CD8-positive, alpha-beta memory T cell (primary cell): ENCODE measurements at regions of chr1 and their contacts with region 1.

Region 1: GRCh38 chr1:203326830-203327683 is 21.7 kb downstream of the BTG2 start:
- DNase-seq: peak; percentile 91 to 97 (median 95)
- H3K4me3 ChIP-seq: peak overlapping the region; percentile 78
- H3K4me3 Mint-ChIP-seq: peak overlapping the region; percentile 77 to 90 (median 80)
- H3K27ac ChIP-seq: peak overlapping the region; percentile 90
- H3K27ac Mint-ChIP-seq: peak overlapping the region; percentile 93 to 99 (median 98)
- H3K4me1 ChIP-seq: peaks cover 63% of the 10 kb centered on the region
- H3K4me1 Mint-ChIP-seq: peaks cover 65 to 68% (median 66%) of the 10 kb centered on the region in 3 donors
- H3K27me3 ChIP-seq: no peaks in the 10 kb centered on the region
- H3K27me3 Mint-ChIP-seq: peaks cover 0 to 3% of the 10 kb centered on the region in 2 donors

Region 2: GRCh38 chr1:203290261-203291089 is 36.6 kb before region 1 on chr1:
- CTCF ChIA-PET with region 1: interaction called, 775 read pairs
- POLR2A ChIA-PET with region 1: interaction called, 140 read pairs
- DNase-seq: peak; percentile 95 to 98 (median 97)
- H3K4me3 ChIP-seq: peak overlapping the region; percentile 76
- H3K4me3 Mint-ChIP-seq: peak overlapping the region; percentile 63 to 87 (median 85)
- H3K27ac ChIP-seq: peak overlapping the region; percentile 99
- H3K27ac Mint-ChIP-seq: peak overlapping the region; percentile 99 to 100 (median 100)
- H3K4me1 ChIP-seq: peaks cover 62% of the 10 kb centered on the region
- H3K4me1 Mint-ChIP-seq: peaks cover 64 to 73% (median 64%) of the 10 kb centered on the region in 3 donors
- H3K27me3 ChIP-seq: no peaks in the 10 kb centered on the region
- H3K27me3 Mint-ChIP-seq: peaks cover 0 to 13% of the 10 kb centered on the region in 2 donors

Region 3: GRCh38 chr1:203311368-203312301 is 15.4 kb before region 1 on chr1:
- CTCF ChIA-PET with region 1: interaction called, 116 read pairs
- POLR2A ChIA-PET with region 1: interaction called, 261 read pairs
- DNase-seq: no peak
- H3K4me3 ChIP-seq: no peak overlapping the region
- H3K4me3 Mint-ChIP-seq: peak overlapping the region in 2 of 7 donors; percentile 17 to 51
- H3K27ac ChIP-seq: no peak overlapping the region
- H3K27ac Mint-ChIP-seq: peak overlapping the region; percentile 31 to 99 (median 74)
- H3K4me1 ChIP-seq: peaks cover 46% of the 10 kb centered on the region
- H3K4me1 Mint-ChIP-seq: peaks cover 53 to 65% (median 60%) of the 10 kb centered on the region in 3 donors
- H3K27me3 ChIP-seq: no peaks in the 10 kb centered on the region
- H3K27me3 Mint-ChIP-seq: peaks cover 0 to 6% of the 10 kb centered on the region in 2 donors

Region 4: DNA sequence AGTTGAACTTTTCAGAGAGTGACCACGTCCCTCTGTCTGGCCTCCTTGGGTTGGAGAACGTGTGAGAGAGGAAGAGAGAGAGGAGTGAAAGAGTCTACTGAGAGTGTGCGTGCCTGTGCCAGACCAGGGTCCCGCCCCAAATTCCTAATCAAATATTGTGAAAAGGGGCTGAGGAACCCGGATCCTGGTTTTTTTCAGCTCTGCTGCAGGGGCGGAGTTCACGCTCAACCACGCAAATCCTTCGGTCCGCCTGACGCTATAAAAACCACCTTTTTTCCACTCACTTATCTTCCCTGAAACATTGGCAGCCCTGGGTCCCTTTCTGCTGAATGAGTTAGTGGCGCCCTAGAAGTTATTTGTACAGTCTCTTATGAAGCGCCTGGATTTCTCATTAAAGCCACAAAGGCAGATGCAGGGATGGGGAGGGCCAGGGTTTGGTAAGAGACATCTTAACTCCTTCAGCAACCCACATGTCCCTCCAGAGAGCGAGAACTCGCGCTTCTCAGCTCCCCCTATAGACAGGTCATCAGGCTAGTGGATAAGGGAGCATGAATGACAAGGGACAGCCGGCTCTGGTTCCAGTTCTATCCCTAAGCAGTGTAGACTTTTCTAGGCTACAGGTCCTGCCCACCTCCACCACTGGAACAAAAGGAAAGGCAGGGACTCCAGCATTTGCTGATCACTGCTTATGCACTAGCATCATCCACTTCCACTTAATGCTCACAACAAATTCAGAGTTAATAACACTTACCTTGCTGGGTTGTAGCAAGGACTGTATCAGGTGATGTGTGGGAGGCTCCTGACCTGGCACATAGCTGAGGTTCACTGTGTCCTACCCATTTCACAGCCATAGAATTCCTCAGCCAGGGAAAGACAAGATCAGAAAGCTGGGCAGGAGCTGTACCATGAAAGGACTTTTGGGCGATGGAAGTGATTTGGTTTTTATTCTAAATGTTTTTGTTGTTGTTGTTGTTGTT is 24.3 kb after region 1 on chr1 and contains the start of gene FMOD:
- CTCF ChIA-PET with region 1: no interaction called
- POLR2A ChIA-PET with region 1: no interaction called
- DNase-seq: no peak
- H3K4me3 ChIP-seq: no peak within 1 kb of the TSS
- H3K4me3 Mint-ChIP-seq: no peak within 1 kb of the TSS
- H3K27ac ChIP-seq: no peak within 1 kb of the TSS
- H3K27ac Mint-ChIP-seq: no peak within 1 kb of the TSS
- H3K4me1 ChIP-seq: no peaks in the 10 kb centered on the region
- H3K4me1 Mint-ChIP-seq: peaks cover 0 to 3% (median 0%) of the 10 kb centered on the region in 3 donors
- H3K27me3 ChIP-seq: peaks cover 19% of the 10 kb centered on the region
- H3K27me3 Mint-ChIP-seq: peaks cover 32 to 79% of the 10 kb centered on the region in 2 donors
- total RNA-seq, gene FMOD: 0.51 to 1.2 TPM

Region 5: GRCh38 chr1:203381151-203381751 is 54.2 kb after region 1 on chr1:
- CTCF ChIA-PET with region 1: no interaction called
- POLR2A ChIA-PET with region 1: no interaction called
- DNase-seq: no peak
- H3K4me3 ChIP-seq: no peak overlapping the region
- H3K4me3 Mint-ChIP-seq: no peak overlapping the region
- H3K27ac ChIP-seq: no peak overlapping the region
- H3K27ac Mint-ChIP-seq: no peak overlapping the region
- H3K4me1 ChIP-seq: no peaks in the 10 kb centered on the region
- H3K4me1 Mint-ChIP-seq: no peaks in the 10 kb centered on the region
- H3K27me3 ChIP-seq: no peaks in the 10 kb centered on the region
- H3K27me3 Mint-ChIP-seq: peaks cover 7 to 37% of the 10 kb centered on the region in 2 donors